Dendritic cell treated with granulocyte-macrophage colony-stimulating factor and Interleukin-4, amounts not matched to agents 40 ng/mL and 50 ng/mL, for 4 days (primary cell): ENCODE measurements at regions of chr6 and their contacts with region 1.

Region 1: GRCh38 chr6:21846541-21847451 is 253.2 kb downstream of the SOX4 start:
- H3K4me3 Mint-ChIP-seq: no peak overlapping the region
- H3K27ac Mint-ChIP-seq: no peak overlapping the region
- H3K4me1 Mint-ChIP-seq: peaks cover 14% of the 10 kb centered on the region
- H3K27me3 Mint-ChIP-seq: no peaks in the 10 kb centered on the region

Region 2: GRCh38 chr6:21610341-21610740 is 236.5 kb before region 1 on chr6:
- intact Hi-C with region 1: loop called (anchors 10 kb)
- H3K4me3 Mint-ChIP-seq: no peak overlapping the region
- H3K27ac Mint-ChIP-seq: no peak overlapping the region
- H3K4me1 Mint-ChIP-seq: peaks cover 25% of the 10 kb centered on the region
- H3K27me3 Mint-ChIP-seq: no peaks in the 10 kb centered on the region

Region 3: GRCh38 chr6:21722510-21722909 is 124.3 kb before region 1 on chr6:
- intact Hi-C with region 1: no loop called
- H3K4me3 Mint-ChIP-seq: no peak overlapping the region
- H3K27ac Mint-ChIP-seq: no peak overlapping the region
- H3K4me1 Mint-ChIP-seq: no peaks in the 10 kb centered on the region
- H3K27me3 Mint-ChIP-seq: no peaks in the 10 kb centered on the region

Region 4: DNA sequence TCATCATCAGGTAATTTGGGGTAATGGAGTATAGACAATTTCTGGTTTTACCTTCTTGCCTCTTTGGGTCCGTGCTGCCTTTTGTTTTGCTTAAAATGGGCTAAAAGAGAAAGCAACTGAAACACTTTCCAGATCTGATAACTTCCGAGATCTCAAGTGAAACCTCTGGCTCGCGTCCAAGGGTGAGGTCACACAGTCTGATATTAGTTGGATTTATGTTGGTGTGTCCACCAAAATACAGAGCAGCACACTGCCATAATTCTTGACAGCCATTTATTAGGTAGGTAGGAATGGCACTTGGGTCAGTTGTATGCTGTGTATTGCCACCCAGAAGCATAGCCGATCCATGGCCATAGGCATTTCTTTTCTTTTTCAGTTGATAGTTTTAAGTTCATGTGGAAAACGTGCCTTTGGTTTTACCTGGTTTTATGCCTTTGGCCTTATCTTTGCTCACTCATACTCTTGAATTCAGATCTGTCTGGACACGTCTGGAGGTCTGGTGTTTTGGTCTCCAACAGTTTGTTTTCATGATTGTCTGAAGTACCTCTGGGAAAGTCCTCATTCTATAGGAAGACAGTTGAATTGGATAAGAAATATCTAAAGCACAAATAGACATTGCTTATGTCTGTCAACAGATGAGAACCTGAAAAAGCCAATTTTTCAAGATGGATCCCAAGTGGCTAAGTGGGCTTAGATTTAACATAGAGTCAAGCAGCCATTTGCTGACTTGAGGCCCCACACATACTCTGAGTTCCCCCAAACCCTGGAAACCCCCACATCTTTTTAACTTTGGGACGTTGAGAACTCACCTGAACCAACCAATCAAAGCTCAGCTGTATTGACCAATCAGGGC is 67.6 kb after region 1 on chr6:
- intact Hi-C with region 1: no loop called
- H3K4me3 Mint-ChIP-seq: peak overlapping the region; percentile 57
- H3K27ac Mint-ChIP-seq: no peak overlapping the region
- H3K4me1 Mint-ChIP-seq: peaks cover 13% of the 10 kb centered on the region
- H3K27me3 Mint-ChIP-seq: no peaks in the 10 kb centered on the region